ENCODE measurements at regions of chr4 and their contacts with region 1.

Region 1: GRCh38 chr4:73170507-73171167 is 88.0 kb downstream of the ANKRD17 start:
- DNase-seq: no peak
- H3K4me3 Mint-ChIP-seq: no peak overlapping the region
- H3K27ac Mint-ChIP-seq: peak overlapping the region; percentile 61
- H3K4me1 Mint-ChIP-seq: peaks cover 26% of the 10 kb centered on the region
- H3K27me3 Mint-ChIP-seq: no peaks in the 10 kb centered on the region

Region 2: DNA sequence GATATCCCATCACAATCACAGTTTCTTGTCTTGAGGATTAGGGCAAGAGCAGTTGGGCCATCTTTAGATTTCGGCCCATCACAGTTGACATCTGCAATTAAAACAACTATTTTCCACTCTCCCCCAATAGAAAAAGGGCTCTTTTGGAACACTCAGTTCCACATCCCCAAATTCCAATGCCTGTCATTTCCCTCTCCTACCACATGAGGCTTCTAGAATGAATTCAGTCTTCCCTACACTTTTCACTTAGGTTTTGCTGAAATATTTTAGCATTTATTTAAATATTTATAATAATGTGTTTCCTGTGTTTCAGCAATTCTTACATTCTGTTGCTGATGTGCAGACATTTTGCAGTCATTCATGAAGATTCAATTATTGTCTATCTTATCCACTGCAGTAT is 219.5 kb before region 1 on chr4:
- CTCF ChIA-PET with region 1: no interaction called
- intact Hi-C with region 1: no loop called
- DNase-seq: no peak
- H3K4me3 Mint-ChIP-seq: no peak overlapping the region
- H3K27ac Mint-ChIP-seq: no peak overlapping the region
- H3K4me1 Mint-ChIP-seq: peaks cover 14% of the 10 kb centered on the region
- H3K27me3 Mint-ChIP-seq: peaks cover 17% of the 10 kb centered on the region

Region 3: DNA sequence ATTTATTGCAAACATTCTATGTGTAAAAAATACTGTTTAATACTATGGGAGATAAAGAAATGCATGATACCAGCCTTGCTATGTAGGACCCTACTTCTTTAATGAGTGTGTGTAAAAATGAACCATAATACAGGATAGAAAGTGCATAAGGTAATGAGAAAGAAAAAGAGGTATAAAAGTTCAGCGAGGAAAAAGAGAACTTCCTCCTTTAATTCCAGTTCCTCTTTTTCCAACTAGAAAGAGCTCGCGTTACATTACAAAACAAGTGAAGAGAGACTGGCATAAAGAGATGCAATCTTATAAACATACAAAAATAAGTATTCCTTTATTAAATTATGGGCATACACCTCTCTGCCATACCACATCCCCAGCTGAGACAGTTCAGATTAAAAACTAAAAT is 10.6 kb after region 1 on chr4:
- CTCF ChIA-PET with region 1: no interaction called
- intact Hi-C with region 1: loop called (anchors 1 kb)
- DNase-seq: no peak
- H3K4me3 Mint-ChIP-seq: no peak overlapping the region
- H3K27ac Mint-ChIP-seq: no peak overlapping the region
- H3K4me1 Mint-ChIP-seq: peaks cover 28% of the 10 kb centered on the region
- H3K27me3 Mint-ChIP-seq: no peaks in the 10 kb centered on the region

Region 4: GRCh38 chr4:73213916-73214653 is 43.4 kb after region 1 on chr4:
- CTCF ChIA-PET with region 1: no interaction called
- intact Hi-C with region 1: loop called (anchors 5 kb)
- DNase-seq: no peak
- H3K4me3 Mint-ChIP-seq: no peak overlapping the region
- H3K27ac Mint-ChIP-seq: no peak overlapping the region
- H3K4me1 Mint-ChIP-seq: peaks cover 25% of the 10 kb centered on the region
- H3K27me3 Mint-ChIP-seq: no peaks in the 10 kb centered on the region

Measured in activated naive CD4-positive, alpha-beta T cell treated with anti-CD3 and anti-CD28 coated beads for 36 hours (primary cell).